Left cardiac atrium (tissue), 4 donors: ENCODE measurements at regions of chr7 and their contacts with region 1.

Region 1: DNA sequence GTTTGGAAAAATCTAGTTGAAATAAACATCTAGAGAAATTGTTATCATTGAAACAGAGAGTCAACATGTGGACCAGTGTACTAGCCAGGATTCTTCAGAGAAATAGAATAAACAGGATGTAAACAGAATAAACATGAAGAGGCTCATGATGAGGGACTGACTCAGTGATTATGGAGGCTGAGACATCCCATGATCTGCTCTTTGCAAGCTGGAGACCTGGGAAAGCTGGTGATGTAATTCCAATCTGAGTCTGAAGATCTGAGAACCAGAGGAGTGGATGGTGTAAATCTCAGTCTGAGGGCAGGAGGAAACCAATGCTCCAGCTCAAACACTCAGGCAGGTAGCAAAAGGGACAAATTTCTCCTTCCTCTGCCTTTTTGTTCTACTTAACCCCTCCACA is 62.9 kb upstream of the FAM180A start:
- DNase-seq: no peak
- ATAC-seq: no peak

Region 2: DNA sequence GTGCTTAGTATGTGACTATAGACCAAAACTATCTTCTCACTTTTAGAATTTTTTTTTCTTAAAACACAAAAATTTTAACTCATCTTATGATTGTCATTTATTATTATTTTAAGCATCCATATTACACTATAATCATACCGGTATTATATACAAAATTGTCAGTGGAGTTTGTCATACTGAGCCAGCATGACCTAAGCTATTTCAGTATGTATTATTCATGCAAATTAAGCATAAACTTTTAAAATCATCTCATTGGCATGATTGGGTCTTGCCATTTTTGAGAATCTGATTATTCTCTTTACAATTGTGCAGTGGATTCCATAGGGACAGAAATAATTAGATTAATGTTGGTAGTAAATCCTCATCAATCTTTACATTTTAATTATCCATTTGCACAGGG is 195.4 kb before region 1 on chr7:
- intact Hi-C with region 1: no loop called
- DNase-seq: no peak
- ATAC-seq: no peak

Region 3: GRCh38 chr7:135994466-135995205 is 183.1 kb after region 1 on chr7:
- intact Hi-C with region 1: loop called in 1 of 2 experiments (anchors 5 kb)
- DNase-seq: no peak
- ATAC-seq: no peak

Region 4: DNA sequence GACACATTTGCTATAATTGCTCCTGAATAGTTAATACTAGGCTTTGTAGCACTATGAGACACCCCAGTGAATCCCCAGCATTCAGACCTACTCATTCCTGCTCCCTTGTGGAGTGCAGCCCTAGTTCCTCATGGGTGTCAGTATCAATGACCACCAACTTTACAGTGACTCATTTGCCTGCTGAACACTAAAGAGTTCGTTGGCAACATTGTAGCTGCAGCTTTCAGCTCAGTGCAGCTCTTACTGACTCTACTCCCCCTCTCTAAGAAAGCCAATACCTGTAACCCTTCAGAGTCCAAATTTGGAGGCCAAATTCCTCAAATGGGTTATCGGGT is 292.7 kb after region 1 on chr7:
- intact Hi-C with region 1: no loop called
- DNase-seq: no peak
- ATAC-seq: no peak